ENCODE measurements at regions of chr2 and their contacts with region 1.

Region 1: GRCh38 chr2:155866477-155866876 is 466.0 kb downstream of the NR4A2 start:
- DNase-seq: no peak
- H3K4me3 ChIP-seq: no peak overlapping the region
- H3K27ac ChIP-seq: no peak overlapping the region
- H3K4me1 ChIP-seq: no peaks in the 10 kb centered on the region
- H3K27me3 ChIP-seq: no peaks in the 10 kb centered on the region
- CTCF ChIP-seq: no peak

Region 2: DNA sequence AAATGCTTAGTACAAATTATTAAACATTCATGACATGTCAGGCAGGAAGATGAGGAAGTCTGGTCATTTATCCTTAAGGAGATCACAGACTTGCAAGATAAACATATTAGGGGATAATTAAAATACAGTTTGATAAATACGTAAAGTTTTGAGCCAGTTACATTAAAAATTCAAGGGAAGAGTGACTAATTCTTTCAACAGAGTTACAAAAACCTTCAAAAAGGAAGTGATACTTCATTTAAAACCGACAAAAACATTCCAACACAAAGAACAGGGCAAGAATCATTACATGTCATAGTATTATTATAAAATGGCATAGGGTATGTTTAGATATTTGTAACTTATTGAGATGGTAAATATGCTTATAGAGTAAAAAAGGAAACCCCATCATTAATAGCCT is 169.9 kb before region 1 on chr2:
- intact Hi-C with region 1: no loop called
- DNase-seq: no peak
- H3K4me3 ChIP-seq: no peak overlapping the region
- H3K27ac ChIP-seq: no peak overlapping the region
- H3K4me1 ChIP-seq: no peaks in the 10 kb centered on the region
- H3K27me3 ChIP-seq: no peaks in the 10 kb centered on the region
- CTCF ChIP-seq: no peak

Region 3: DNA sequence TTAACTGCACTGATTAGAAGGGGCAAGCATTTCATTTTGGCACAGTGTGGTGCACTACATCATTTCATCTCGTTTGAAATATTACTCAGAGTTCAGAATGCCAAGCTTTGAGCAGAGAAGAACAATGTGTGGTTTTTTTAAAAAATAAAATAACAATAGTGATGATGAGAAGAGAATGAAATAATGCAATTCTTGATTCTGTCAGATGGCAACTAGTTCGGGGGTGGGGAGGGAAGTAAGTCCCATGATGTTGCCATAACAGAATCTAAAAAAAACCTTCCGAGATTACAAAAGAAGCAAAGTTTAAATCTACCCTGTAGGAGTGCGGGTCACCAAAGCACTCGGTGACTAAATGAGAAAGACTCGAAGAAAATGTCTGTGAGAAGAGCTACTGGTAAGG is 24.4 kb before region 1 on chr2:
- intact Hi-C with region 1: no loop called
- DNase-seq: no peak
- H3K4me3 ChIP-seq: no peak overlapping the region
- H3K27ac ChIP-seq: no peak overlapping the region
- H3K4me1 ChIP-seq: peaks cover 0 to 3% (median 0%) of the 10 kb centered on the region in 4 donors
- H3K27me3 ChIP-seq: no peaks in the 10 kb centered on the region
- CTCF ChIP-seq: no peak

Region 4: GRCh38 chr2:156309167-156309566 is 442.7 kb after region 1 on chr2:
- intact Hi-C with region 1: loop called (anchors 10 kb)
- DNase-seq: no peak
- H3K4me3 ChIP-seq: no peak overlapping the region
- H3K27ac ChIP-seq: no peak overlapping the region
- H3K4me1 ChIP-seq: no peaks in the 10 kb centered on the region
- H3K27me3 ChIP-seq: no peaks in the 10 kb centered on the region
- CTCF ChIP-seq: no peak

Measured in tibial artery (tissue), 4 donors.